Esophagus muscularis mucosa (tissue), 4 donors: ENCODE measurements at regions of chr7 and their contacts with region 1.

Region 1: GRCh38 chr7:135573541-135573940 is 15.8 kb downstream of the NUP205 start:
- DNase-seq: no peak
- H3K4me3 ChIP-seq: no peak overlapping the region
- H3K27ac ChIP-seq: no peak overlapping the region
- H3K4me1 ChIP-seq: peaks cover 0 to 11% (median 6%) of the 10 kb centered on the region in 4 donors
- H3K27me3 ChIP-seq: no peaks in the 10 kb centered on the region
- CTCF ChIP-seq: no peak
- EP300 ChIP-seq: no peak
- POLR2A ChIP-seq: no peak

Region 2: DNA sequence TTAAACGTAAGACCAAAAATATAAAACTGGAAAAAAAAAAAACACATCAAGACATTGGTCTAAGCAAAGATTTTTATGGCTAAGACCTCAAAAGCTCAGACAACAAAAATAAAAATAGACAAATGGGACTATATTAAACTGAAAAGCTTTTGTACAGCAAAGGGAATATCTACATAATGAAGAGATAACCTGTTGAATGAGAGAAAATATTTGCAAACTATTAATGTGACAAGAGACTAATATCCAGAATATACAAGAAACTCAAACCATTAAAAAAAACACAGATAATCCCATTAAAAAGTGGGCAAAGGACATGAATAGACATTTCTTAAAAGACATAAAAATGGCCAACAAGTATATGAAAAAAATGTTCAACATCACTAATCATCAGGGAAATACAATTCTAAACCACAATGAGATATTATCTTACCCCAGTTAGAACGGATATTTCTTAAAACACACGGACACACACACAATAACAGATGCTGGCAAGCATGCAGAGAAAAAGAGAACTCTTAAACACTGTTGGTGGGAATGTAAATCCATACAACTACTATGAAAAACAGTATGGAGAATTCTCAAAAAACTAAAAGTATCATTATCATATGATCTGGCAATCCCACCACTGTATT is 92.5 kb before region 1 on chr7:
- intact Hi-C with region 1: no loop called
- DNase-seq: no peak
- H3K4me3 ChIP-seq: no peak overlapping the region
- H3K27ac ChIP-seq: no peak overlapping the region
- H3K4me1 ChIP-seq: peaks cover 0 to 12% (median 3%) of the 10 kb centered on the region in 4 donors
- H3K27me3 ChIP-seq: no peaks in the 10 kb centered on the region
- CTCF ChIP-seq: no peak
- EP300 ChIP-seq: no peak
- POLR2A ChIP-seq: no peak

Region 3: GRCh38 chr7:135601182-135601581 is 27.6 kb after region 1 on chr7:
- intact Hi-C with region 1: loop called (anchors 5 kb)
- DNase-seq: no peak
- H3K4me3 ChIP-seq: no peak overlapping the region
- H3K27ac ChIP-seq: no peak overlapping the region
- H3K4me1 ChIP-seq: no peaks in the 10 kb centered on the region
- H3K27me3 ChIP-seq: no peaks in the 10 kb centered on the region
- CTCF ChIP-seq: no peak
- EP300 ChIP-seq: no peak
- POLR2A ChIP-seq: no peak